CD14-positive monocyte (primary cell): ENCODE measurements at regions of chr2 and their contacts with region 1.

Region 1: GRCh38 chr2:39379643-39380524 is 57.2 kb downstream of the MAP4K3 start:
- DNase-seq: peak; percentile 23 to 39 (median 35)
- H3K4me3 ChIP-seq: no peak overlapping the region
- H3K4me3 Mint-ChIP-seq: no peak overlapping the region
- H3K27ac ChIP-seq: no peak overlapping the region
- H3K27ac Mint-ChIP-seq: peak overlapping the region in 1 of 7 donors; percentile 45
- H3K4me1 ChIP-seq: peaks cover 7 to 14% of the 10 kb centered on the region in 2 donors
- H3K4me1 Mint-ChIP-seq: peaks cover 26% of the 10 kb centered on the region
- H3K27me3 ChIP-seq: no peaks in the 10 kb centered on the region
- H3K27me3 Mint-ChIP-seq: peaks cover 0 to 1% (median 0%) of the 10 kb centered on the region in 3 donors
- CTCF ChIP-seq: peak; percentile 75

Region 2: DNA sequence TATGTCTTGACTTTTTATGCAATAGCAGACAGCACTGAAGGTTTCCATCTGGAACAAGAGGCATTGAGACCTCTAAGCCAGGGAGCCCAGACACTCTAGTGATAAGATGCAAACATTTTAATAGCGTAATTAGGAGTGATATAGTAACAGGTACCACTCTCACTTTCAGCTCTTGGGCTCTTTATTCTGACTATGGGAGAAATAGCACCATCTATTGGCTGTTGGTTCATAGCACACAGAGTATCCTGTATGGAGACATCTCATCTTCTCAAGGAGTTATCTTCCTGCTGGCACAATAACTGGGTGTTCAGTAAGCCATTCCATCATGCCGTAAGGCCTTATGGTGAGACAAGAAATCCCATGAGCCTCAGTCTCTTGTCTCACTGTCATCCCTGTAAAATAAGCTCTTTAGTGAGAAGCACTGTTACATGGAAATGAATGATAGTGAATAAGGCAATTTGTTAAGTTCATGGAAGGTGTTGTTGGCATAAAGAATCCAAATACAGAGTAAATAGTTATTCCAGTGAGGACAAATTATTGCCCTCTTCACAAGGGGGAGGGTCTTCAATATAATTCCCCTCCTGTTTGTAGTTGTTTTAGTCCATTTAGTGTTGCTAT is 350.9 kb after region 1 on chr2:
- intact Hi-C with region 1: loop called in 1 of 2 experiments (anchors 10 kb)
- DNase-seq: no peak
- H3K4me3 ChIP-seq: no peak overlapping the region
- H3K4me3 Mint-ChIP-seq: no peak overlapping the region
- H3K27ac ChIP-seq: no peak overlapping the region
- H3K27ac Mint-ChIP-seq: no peak overlapping the region
- H3K4me1 ChIP-seq: no peaks in the 10 kb centered on the region
- H3K4me1 Mint-ChIP-seq: peaks cover 2% of the 10 kb centered on the region
- H3K27me3 ChIP-seq: no peaks in the 10 kb centered on the region
- H3K27me3 Mint-ChIP-seq: peaks cover 0 to 4% (median 1%) of the 10 kb centered on the region in 3 donors
- CTCF ChIP-seq: peak; percentile 68